Psoas muscle (tissue), 8 donors: ENCODE measurements at regions of chr4 and their contacts with region 1.

Region 1: DNA sequence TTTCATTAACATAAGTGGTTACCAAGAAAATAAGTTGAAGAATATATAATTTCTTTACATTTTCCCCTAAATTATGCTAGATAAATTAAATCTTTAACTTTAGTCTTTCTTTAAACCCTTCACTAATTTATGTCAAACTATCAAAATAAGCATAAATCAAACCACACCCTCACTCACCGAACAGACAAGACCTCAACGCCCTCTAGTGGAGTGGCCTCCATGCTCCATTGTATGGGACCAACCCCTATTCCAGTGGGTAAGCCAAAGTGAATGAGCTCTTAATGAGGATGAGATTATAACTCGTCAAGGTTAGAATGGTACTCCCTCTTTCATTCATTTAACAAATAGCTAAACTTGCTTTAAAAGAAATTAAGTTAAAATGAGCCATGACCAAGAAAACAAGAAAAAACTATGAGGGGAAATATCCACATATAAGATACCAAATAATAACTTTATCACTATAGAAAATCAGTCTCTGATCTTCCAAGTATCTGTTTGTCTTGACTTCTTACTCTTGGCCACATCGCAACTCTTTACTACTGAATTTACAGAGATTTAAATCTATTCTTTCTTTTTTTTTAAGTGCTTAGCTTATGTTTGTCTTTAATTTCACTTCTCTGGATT is 15.6 kb upstream of the BBS12 start:
- DNase-seq: peak; percentile 46 to 67
- ATAC-seq: peak; percentile 75 to 90 (median 85)
- H3K4me3 ChIP-seq: no peak overlapping the region
- H3K27ac ChIP-seq: no peak overlapping the region
- H3K4me1 ChIP-seq: no peaks in the 10 kb centered on the region
- H3K27me3 ChIP-seq: no peaks in the 10 kb centered on the region
- CTCF ChIP-seq: peak; percentile 85

Region 2: DNA sequence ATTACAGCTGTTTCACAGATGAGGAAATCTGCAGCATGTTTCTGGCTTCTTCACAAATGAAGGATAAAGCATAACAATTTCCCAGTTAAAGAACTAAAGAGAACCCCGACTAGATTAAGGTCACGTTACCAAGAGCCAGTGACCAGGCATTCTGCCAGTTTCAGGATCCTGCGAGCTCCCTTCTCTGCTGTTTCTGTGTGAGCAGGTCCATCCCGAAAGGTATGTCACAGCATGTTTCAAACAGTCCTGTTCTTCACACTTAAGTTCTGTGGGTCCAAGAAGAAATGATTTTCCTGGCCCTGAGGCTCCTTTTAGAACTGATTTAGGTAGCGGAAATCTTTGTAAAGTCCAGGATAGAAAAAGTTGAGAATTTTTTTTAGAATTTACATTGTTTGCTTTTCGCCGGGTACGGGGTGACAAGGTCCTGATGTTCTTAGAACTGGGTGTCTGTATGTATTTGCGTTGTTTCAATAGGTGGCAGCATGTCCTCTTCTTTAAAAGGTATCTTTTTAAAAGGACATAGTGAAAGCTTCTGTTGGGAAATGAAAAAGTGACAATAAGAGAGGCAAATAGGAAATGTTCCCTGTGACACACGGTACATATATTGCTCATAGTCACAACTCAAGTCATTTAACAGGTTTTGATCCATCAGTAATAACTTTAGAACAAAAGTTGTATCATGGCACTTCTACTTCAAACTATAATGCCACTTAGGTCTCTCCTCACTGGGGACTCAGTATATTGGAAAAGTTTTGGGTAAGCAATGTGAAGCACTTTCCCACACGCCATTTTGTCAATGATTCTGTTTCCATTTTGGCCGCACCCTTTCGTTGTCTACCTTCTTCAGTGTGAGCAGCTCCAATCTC is 114.4 kb before region 1 on chr4:
- intact Hi-C with region 1: loop called (anchors 2 kb)
- DNase-seq: no peak
- ATAC-seq: peak in 3 of 4 donors; percentile 60 to 94 (median 75)
- H3K4me3 ChIP-seq: no peak overlapping the region
- H3K27ac ChIP-seq: no peak overlapping the region
- H3K4me1 ChIP-seq: no peaks in the 10 kb centered on the region
- H3K27me3 ChIP-seq: peaks cover 0 to 6% (median 0%) of the 10 kb centered on the region in 3 donors
- CTCF ChIP-seq: peak; percentile 55

Region 3: DNA sequence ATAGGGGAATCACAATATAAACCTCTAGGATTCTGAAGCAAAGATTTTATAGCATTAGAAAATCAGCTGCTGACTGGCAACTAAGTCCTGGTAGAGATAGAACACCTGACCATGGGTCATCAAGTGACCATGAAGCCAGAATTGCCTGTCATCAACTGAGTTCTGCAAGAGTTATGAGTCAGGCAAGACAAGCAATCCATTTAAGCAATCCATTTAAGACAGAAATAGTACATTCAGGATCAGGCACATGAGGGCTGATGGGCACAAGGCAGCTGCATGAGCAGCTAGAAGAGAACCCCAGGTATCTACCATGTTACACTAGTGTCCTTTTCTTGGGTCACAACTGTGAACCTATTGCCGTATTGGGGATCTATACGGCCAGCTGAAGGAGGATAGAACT is 778.6 kb after region 1 on chr4:
- intact Hi-C with region 1: no loop called
- DNase-seq: peak; percentile 21 to 63
- ATAC-seq: peak; percentile 98 to 99 (median 99)
- H3K4me3 ChIP-seq: no peak overlapping the region
- H3K27ac ChIP-seq: peak overlapping the region; percentile 79
- H3K4me1 ChIP-seq: peaks cover 13% of the 10 kb centered on the region
- H3K27me3 ChIP-seq: no peaks in the 10 kb centered on the region
- CTCF ChIP-seq: no peak